ENCODE measurements at regions of chr11 and their contacts with region 1.

Region 1: DNA sequence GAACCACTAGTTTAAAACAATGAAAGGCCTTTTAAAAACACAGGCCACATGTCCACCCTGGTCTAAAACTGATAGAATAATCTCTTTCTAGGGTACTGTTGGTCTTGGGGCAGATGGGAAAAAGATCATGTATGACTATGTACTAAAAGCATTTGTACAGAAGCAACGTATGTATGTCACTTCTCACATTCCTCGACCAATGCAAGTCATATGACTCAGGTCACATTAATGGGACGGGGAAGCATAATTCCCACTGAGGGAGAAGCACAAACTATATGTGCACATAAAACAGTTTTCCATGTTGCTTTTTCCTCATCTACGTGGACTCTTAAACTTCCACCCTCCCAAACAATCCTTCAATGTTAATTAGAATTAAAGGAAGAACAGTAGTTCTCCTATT is 32.2 kb upstream of the GAB2 start:
- DNase-seq: peak; percentile 60
- ATAC-seq: peak; percentile 17; the same call in 1 of the 2 replicates
- H3K4me3 ChIP-seq: no peak overlapping the region
- H3K27ac ChIP-seq: no peak overlapping the region
- H3K4me1 ChIP-seq: no peaks in the 10 kb centered on the region; the same call in 1 of the 2 replicates
- H3K27me3 ChIP-seq: no peaks in the 10 kb centered on the region
- CTCF ChIP-seq: no peak
- POLR2A ChIP-seq: no peak
- RAD21 ChIP-seq: no peak

Region 2: DNA sequence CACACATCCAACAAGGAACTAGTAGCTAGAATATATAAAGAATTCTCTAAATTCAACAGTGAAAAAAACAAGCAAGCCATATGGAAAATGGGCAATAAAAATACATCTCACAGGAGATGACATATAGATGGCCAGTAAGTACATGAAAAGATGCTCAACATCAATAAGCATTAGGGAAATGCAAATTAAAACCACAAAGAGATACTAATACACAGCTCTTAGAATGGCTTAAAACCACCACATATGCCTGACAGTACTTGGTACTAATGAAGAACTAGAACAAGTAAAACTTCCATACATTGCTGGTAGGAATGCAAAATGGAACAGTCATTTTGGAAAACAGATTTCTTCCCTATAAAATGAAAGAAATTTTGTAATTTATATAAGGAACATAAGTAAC is 39.3 kb after region 1 on chr11:
- CTCF ChIA-PET with region 1: no interaction called
- POLR2A ChIA-PET with region 1: no interaction called
- dilution Hi-C with region 1: no loop called
- in situ Hi-C with region 1: no loop called
- intact Hi-C with region 1: loop called (anchors 5 kb)
- DNase-seq: no peak
- ATAC-seq: no peak
- H3K4me3 ChIP-seq: no peak overlapping the region
- H3K27ac ChIP-seq: no peak overlapping the region
- H3K4me1 ChIP-seq: no peaks in the 10 kb centered on the region
- H3K27me3 ChIP-seq: no peaks in the 10 kb centered on the region
- CTCF ChIP-seq: no peak
- POLR2A ChIP-seq: no peak
- RAD21 ChIP-seq: no peak

Region 3: GRCh38 chr11:78798660-78799059 is 348.8 kb after region 1 on chr11:
- CTCF ChIA-PET with region 1: no interaction called
- POLR2A ChIA-PET with region 1: no interaction called
- dilution Hi-C with region 1: no loop called
- in situ Hi-C with region 1: no loop called
- intact Hi-C with region 1: no loop called
- DNase-seq: peak; percentile 81
- ATAC-seq: peak; percentile 36
- H3K4me3 ChIP-seq: no peak overlapping the region
- H3K27ac ChIP-seq: peak overlapping the region; percentile 87
- H3K4me1 ChIP-seq: peaks cover 48% of the 10 kb centered on the region
- H3K27me3 ChIP-seq: no peaks in the 10 kb centered on the region
- CTCF ChIP-seq: peak; percentile 75
- POLR2A ChIP-seq: no peak
- RAD21 ChIP-seq: peak; percentile 69

Measured in IMR-90 (cell line).